Activated CD4-positive, alpha-beta T cell treated with anti-CD3 and anti-CD28 coated beads for 36 hours (primary cell): ENCODE measurements at regions of chr1 and their contacts with region 1.

Region 1: GRCh38 chr1:247331172-247331991 is at the start of gene ZNF496:
- DNase-seq: peak; percentile 86
- ATAC-seq: peak; percentile 82
- H3K4me3 Mint-ChIP-seq: peak within 1 kb of the TSS; percentile 78
- H3K27ac Mint-ChIP-seq: peak within 1 kb of the TSS; percentile 76
- H3K4me1 Mint-ChIP-seq: peaks cover 12% of the 10 kb centered on the region
- H3K27me3 Mint-ChIP-seq: no peaks in the 10 kb centered on the region
- total RNA-seq, gene ZNF496: 9.3 to 9.5 TPM

Region 2: GRCh38 chr1:246506674-246507481 is 824.5 kb before region 1 on chr1 and contains the start of gene SMYD3:
- CTCF ChIA-PET with region 1: no interaction called
- POLR2A ChIA-PET with region 1: no interaction called
- intact Hi-C with region 1: loop called in 1 of 2 experiments (anchors 5 kb)
- DNase-seq: peak; percentile 84
- ATAC-seq: peak; percentile 93
- H3K4me3 Mint-ChIP-seq: peak within 1 kb of the TSS; percentile 78
- H3K27ac Mint-ChIP-seq: peak within 1 kb of the TSS; percentile 89
- H3K4me1 Mint-ChIP-seq: peaks cover 26% of the 10 kb centered on the region
- H3K27me3 Mint-ChIP-seq: no peaks in the 10 kb centered on the region
- total RNA-seq, gene SMYD3: 17.2 to 18.4 TPM

Region 3: DNA sequence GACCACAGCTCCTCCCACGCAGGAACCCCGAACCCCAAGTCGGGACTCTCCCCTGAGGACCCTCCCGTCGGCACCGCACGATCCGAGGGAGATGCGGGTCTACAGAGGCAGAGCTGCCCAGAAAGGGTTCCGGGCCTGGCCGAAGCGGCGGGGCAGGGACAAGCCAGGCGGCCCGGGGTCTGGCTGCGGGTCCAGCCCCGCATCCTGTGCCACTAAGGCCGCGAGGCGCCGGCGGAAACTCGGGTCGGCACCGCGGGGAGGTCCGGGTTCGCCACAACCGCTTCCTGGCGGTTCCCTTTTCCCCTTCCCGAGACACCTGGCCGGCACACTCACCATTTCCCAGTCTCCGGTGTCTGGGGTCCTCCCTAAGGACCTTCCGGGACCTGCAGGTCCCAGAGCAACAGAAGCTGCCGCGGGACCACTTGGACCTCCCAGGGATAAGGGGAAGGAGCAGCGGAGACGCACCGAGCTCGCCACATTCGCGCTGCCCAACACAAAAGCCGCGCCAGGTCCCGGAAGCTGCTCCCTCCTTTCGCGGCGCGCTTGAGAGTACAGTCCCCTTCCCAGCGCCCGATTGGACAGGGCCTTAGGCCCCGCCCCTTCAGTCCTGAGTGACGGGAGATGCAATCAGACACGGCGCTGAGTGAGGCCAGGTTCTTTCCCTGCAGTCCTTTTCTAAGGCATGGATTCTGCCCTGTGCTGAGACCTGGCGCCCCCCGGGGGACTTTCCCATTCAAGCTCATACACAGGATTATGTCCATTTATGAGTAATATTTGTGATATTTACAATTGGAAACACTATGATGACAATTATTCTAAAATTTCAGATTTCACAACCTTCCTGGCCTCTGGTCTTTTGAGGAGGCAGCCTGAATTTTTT is 252.9 kb before region 1 on chr1 and contains the start of gene ZNF670:
- CTCF ChIA-PET with region 1: no interaction called
- POLR2A ChIA-PET with region 1: no interaction called
- intact Hi-C with region 1: loop called (anchors 1 to 10 kb)
- DNase-seq: peak; percentile 97
- ATAC-seq: peak; percentile 100
- H3K4me3 Mint-ChIP-seq: peak within 1 kb of the TSS; percentile 89
- H3K27ac Mint-ChIP-seq: peak within 1 kb of the TSS; percentile 91
- H3K4me1 Mint-ChIP-seq: peaks cover 27% of the 10 kb centered on the region
- H3K27me3 Mint-ChIP-seq: peaks cover 5% of the 10 kb centered on the region
- total RNA-seq, gene ZNF670: 4.3 to 4.9 TPM

Region 4: GRCh38 chr1:247103859-247104591 is 227.4 kb before region 1 on chr1 and contains the start of gene ZNF669:
- CTCF ChIA-PET with region 1: no interaction called
- POLR2A ChIA-PET with region 1: no interaction called
- intact Hi-C with region 1: loop called (anchors 2 to 5 kb)
- DNase-seq: peak; percentile 97
- ATAC-seq: peak; percentile 100
- H3K4me3 Mint-ChIP-seq: peak within 1 kb of the TSS; percentile 86
- H3K27ac Mint-ChIP-seq: peak within 1 kb of the TSS; percentile 90
- H3K4me1 Mint-ChIP-seq: peaks cover 19% of the 10 kb centered on the region
- H3K27me3 Mint-ChIP-seq: peaks cover 16% of the 10 kb centered on the region
- total RNA-seq, gene ZNF669: 6.9 to 8.8 TPM

Region 5: GRCh38 chr1:247172996-247173395 is 158.4 kb before region 1 on chr1:
- CTCF ChIA-PET with region 1: no interaction called
- POLR2A ChIA-PET with region 1: no interaction called
- intact Hi-C with region 1: loop called in 1 of 2 experiments (anchors 5 kb)
- DNase-seq: no peak
- ATAC-seq: no peak
- H3K4me3 Mint-ChIP-seq: no peak overlapping the region
- H3K27ac Mint-ChIP-seq: no peak overlapping the region
- H3K4me1 Mint-ChIP-seq: peaks cover 10% of the 10 kb centered on the region
- H3K27me3 Mint-ChIP-seq: no peaks in the 10 kb centered on the region

Region 6: DNA sequence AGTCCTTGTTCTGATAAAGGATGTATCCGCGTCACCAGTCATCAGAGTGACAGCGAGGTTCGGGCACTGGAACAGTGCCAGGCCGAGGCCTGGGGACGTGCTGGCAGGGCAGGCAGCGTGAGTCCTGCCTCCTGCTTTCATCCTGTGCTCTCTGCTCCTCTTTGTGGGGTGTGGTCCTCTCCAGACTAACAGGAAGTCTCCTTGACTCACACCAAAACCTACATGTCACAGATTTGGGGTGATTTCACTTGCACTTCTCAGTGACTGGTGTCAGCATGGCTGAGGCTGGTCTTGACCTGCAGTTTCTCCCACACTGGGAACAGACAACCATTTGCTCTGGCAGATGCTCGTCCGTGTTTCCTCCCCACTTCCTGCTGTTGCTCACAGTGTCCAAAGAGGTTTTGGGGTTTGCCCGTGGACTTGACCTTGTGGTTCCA is 75.8 kb after region 1 on chr1:
- CTCF ChIA-PET with region 1: no interaction called
- POLR2A ChIA-PET with region 1: no interaction called
- intact Hi-C with region 1: loop called in 1 of 2 experiments (anchors 2 kb)
- DNase-seq: peak; percentile 84
- ATAC-seq: peak; percentile 85
- H3K4me3 Mint-ChIP-seq: peak overlapping the region; percentile 24
- H3K27ac Mint-ChIP-seq: peak overlapping the region; percentile 72
- H3K4me1 Mint-ChIP-seq: peaks cover 41% of the 10 kb centered on the region
- H3K27me3 Mint-ChIP-seq: peaks cover 2% of the 10 kb centered on the region

Region 7: DNA sequence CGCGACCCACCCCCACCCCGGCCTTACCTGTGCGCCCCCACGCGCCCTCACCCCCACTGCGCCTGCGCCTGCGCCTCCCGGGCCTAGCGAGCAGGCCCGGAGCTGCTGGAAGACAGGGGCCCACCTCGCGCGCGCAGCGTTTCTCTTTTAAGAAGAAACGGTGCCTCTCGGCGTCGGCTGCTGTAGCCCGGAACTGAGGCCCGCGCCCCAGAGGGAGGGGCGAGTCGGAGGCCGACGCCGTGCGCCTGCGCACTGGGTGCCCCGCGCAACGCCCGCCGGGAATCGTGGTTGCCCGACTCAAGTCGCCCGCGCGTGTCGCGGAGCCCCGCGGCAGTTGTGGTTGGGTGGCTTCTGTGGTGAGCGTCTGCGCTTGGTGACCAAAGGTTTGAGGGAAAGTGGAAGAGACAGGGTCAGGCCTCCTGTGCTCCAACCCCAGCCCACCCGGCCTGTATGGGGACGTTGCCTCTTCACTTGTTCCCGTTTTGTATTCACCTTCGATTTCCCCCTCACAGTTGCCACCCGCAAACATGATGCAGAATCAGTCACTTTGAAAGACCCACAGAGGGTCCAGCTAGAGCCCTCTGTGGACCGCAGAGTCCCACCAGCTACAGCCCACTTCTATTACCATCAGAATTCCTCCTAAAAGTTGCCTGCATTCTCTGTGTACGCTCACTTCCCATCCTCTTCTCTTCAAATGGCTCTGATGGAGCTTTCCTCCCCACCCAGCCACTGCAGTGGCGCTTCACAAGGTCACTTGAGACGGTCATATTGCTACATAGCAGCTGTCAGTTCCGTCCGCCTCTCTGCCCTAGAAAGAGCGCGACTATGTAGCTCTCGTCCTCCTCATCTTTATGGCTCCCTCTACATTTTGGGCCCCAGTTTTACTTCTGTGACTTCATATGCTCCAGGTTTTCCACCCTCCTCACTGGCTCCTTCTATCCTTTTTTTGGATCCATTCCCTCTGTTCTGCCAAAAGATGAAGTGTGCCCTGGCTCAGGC is 1527.8 kb after region 1 on chr1 and contains the start of gene ZNF692:
- CTCF ChIA-PET with region 1: no interaction called
- POLR2A ChIA-PET with region 1: no interaction called
- intact Hi-C with region 1: loop called in 1 of 2 experiments (anchors 5 kb)
- DNase-seq: peak; percentile 99
- ATAC-seq: peak; percentile 86
- H3K4me3 Mint-ChIP-seq: peak within 1 kb of the TSS; percentile 89
- H3K27ac Mint-ChIP-seq: peak within 1 kb of the TSS; percentile 99
- H3K4me1 Mint-ChIP-seq: peaks cover 55% of the 10 kb centered on the region
- H3K27me3 Mint-ChIP-seq: no peaks in the 10 kb centered on the region
- total RNA-seq, gene ZNF692: 75.9 to 92.3 TPM